ENCODE measurements at regions of chr3 and their contacts with region 1.

Region 1: GRCh38 chr3:10322352-10322710 is 1.4 kb upstream of the SEC13 start:
- DNase-seq: peak; percentile 59 to 76 (median 72)
- ATAC-seq: peak; percentile 76
- H3K4me3 ChIP-seq: no peak overlapping the region
- H3K27ac ChIP-seq: no peak overlapping the region; the same call in 2 of the 3 replicates
- H3K4me1 ChIP-seq: peaks cover 5% of the 10 kb centered on the region in 2 experiments; a peak in 3 of 5 replicates
- H3K27me3 ChIP-seq: peaks cover 18 to 30% of the 10 kb centered on the region in 2 experiments; a peak in 4 of 5 replicates
- CTCF ChIP-seq: peak; percentile 70 to 77 (median 71); a peak in 5 of 6 replicates
- EP300 ChIP-seq: no peak
- POLR2A ChIP-seq: no peak
- RAD21 ChIP-seq: peak; percentile 36 to 74

Region 2: GRCh38 chr3:9503283-9503682 is 819.0 kb before region 1 on chr3:
- CTCF ChIA-PET with region 1: no interaction called
- POLR2A ChIA-PET with region 1: no interaction called
- in situ Hi-C with region 1: loop called (anchors 25 kb)
- intact Hi-C with region 1: no loop called
- DNase-seq: peak; percentile 82 to 90 (median 84)
- ATAC-seq: peak; percentile 77
- H3K4me3 ChIP-seq: no peak overlapping the region
- H3K27ac ChIP-seq: no peak overlapping the region
- H3K4me1 ChIP-seq: peaks cover 0 to 8% of the 10 kb centered on the region in 2 experiments; a peak in 3 of 5 replicates
- H3K27me3 ChIP-seq: peaks cover 20 to 47% of the 10 kb centered on the region in 2 experiments; a peak in 4 of 5 replicates
- CTCF ChIP-seq: peak; percentile 88 to 98 (median 97)
- EP300 ChIP-seq: no peak
- POLR2A ChIP-seq: no peak
- RAD21 ChIP-seq: peak; percentile 92 to 96

Region 3: DNA sequence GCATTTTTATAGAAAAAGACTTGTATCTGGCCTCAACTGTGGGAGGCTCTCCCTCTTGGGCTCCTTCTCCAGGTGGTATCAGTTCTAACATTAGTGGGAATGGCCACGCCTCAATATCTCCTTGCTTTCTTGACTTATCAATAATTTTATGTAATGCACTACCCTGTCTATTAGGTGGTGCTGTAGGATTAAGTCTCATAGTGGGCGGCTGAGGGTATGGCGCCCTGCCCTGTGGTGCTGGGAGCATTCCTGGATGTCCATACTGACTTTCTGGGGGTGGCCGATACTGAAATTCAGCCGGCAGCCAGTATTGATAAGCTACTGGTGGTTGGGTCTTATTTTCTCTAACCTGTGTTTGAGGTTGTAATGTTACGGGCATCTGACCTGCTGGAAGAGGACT is 469.8 kb before region 1 on chr3:
- CTCF ChIA-PET with region 1: no interaction called
- POLR2A ChIA-PET with region 1: no interaction called
- in situ Hi-C with region 1: no loop called
- intact Hi-C with region 1: loop called (anchors 1 kb)
- DNase-seq: no peak
- ATAC-seq: no peak
- H3K4me3 ChIP-seq: no peak overlapping the region
- H3K27ac ChIP-seq: no peak overlapping the region
- H3K4me1 ChIP-seq: no peaks in the 10 kb centered on the region; a peak in 1 of 5 replicates
- H3K27me3 ChIP-seq: no peaks in the 10 kb centered on the region
- CTCF ChIP-seq: peak; percentile 24 to 56 (median 46); a peak in 3 of 6 replicates
- EP300 ChIP-seq: no peak
- POLR2A ChIP-seq: no peak
- RAD21 ChIP-seq: peak in 1 of 2 experiments; percentile 65; a peak in 2 of 4 replicates

Region 4: GRCh38 chr3:10164546-10165393 is 157.6 kb before region 1 on chr3 and contains the start of gene IRAK2:
- CTCF ChIA-PET with region 1: no interaction called
- POLR2A ChIA-PET with region 1: no interaction called
- in situ Hi-C with region 1: no loop called
- intact Hi-C with region 1: loop called (anchors 5 kb)
- DNase-seq: peak; percentile 87 to 96 (median 94)
- ATAC-seq: peak; percentile 96
- H3K4me3 ChIP-seq: peak within 1 kb of the TSS; percentile 69
- H3K27ac ChIP-seq: peak within 1 kb of the TSS; percentile 41; the same call in 1 of the 3 replicates
- H3K4me1 ChIP-seq: peaks cover 0 to 17% of the 10 kb centered on the region in 2 experiments; a peak in 3 of 5 replicates
- H3K27me3 ChIP-seq: no peaks in the 10 kb centered on the region
- CTCF ChIP-seq: peak; percentile 72 to 83 (median 82)
- EP300 ChIP-seq: no peak
- POLR2A ChIP-seq: peak; percentile 64
- RAD21 ChIP-seq: peak; percentile 23 to 32
- polyA plus RNA-seq, gene IRAK2: 0.42 to 1.0 TPM

Region 5: DNA sequence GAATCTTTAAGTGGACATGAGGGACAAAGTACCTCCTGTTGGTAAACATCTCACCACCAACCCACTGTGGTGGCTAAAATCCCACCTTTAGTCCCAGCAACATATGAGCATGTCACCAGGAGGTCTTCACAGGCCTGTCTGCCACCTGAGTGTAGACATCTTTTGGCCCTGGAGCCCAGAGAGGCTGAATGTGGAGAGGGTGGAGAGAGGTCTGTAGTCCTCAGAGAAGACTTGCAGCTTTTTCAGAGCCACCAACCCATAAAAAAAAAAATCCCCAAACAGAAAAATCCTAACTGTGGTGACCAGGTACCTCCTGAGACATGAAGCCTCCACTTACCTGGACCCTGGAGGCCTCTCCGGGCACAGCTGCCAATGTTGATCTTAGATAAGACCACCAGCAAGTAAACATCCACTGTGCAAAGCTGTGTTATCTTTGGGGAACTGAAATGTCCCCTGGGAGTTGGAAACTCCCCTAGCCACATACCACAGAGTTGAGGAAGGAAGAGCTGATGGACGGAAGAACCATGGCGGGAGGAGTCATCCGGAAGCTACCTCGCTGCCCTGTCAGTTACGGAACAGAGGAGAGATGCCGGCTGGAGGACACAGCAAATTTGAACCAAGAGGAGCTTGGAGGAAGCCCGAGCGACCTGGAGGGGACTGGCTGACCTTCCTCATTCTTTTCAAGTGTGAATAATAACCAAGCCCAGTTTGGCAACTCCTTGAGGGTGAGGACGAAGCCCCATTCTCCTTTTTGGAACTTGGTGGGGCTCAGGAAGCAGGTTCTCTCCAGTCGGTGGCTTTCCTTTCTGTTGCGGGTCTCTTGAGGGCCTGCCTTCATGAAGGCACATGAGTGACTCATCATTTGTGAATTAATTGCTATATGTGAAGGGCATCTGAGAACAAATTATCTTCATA is 29.6 kb before region 1 on chr3 and contains the start of gene GHRL:
- CTCF ChIA-PET with region 1: no interaction called
- POLR2A ChIA-PET with region 1: interaction called, 11 read pairs
- in situ Hi-C with region 1: no loop called
- intact Hi-C with region 1: no loop called
- DNase-seq: peak; percentile 51 to 65 (median 56)
- ATAC-seq: peak; percentile 76
- H3K4me3 ChIP-seq: no peak within 1 kb of the TSS
- H3K27ac ChIP-seq: peak within 1 kb of the TSS; percentile 68
- H3K4me1 ChIP-seq: peaks cover 7 to 23% of the 10 kb centered on the region in 2 experiments
- H3K27me3 ChIP-seq: no peaks in the 10 kb centered on the region
- CTCF ChIP-seq: peak in 1 of 3 experiments; percentile 5; a peak in 1 of 6 replicates
- EP300 ChIP-seq: peak; percentile 29; the same call in 1 of the 2 replicates
- POLR2A ChIP-seq: no peak
- RAD21 ChIP-seq: no peak
- polyA plus RNA-seq, gene GHRL: not detected

Region 6: GRCh38 chr3:10311710-10312109 is 10.6 kb before region 1 on chr3:
- CTCF ChIA-PET with region 1: no interaction called
- POLR2A ChIA-PET with region 1: interaction called, 30 read pairs
- in situ Hi-C with region 1: no loop called
- intact Hi-C with region 1: no loop called
- DNase-seq: no peak
- ATAC-seq: no peak; the same call in 1 of the 3 replicates
- H3K4me3 ChIP-seq: no peak overlapping the region
- H3K27ac ChIP-seq: no peak overlapping the region
- H3K4me1 ChIP-seq: peaks cover 0 to 5% of the 10 kb centered on the region in 2 experiments; a peak in 1 of 5 replicates
- H3K27me3 ChIP-seq: no peaks in the 10 kb centered on the region
- CTCF ChIP-seq: no peak
- EP300 ChIP-seq: no peak
- POLR2A ChIP-seq: no peak
- RAD21 ChIP-seq: no peak

Measured in K562 (cell line).